Head of caudate nucleus (tissue), 42 donors: ENCODE measurements at regions of chr6 and their contacts with region 1.

Region 1: DNA sequence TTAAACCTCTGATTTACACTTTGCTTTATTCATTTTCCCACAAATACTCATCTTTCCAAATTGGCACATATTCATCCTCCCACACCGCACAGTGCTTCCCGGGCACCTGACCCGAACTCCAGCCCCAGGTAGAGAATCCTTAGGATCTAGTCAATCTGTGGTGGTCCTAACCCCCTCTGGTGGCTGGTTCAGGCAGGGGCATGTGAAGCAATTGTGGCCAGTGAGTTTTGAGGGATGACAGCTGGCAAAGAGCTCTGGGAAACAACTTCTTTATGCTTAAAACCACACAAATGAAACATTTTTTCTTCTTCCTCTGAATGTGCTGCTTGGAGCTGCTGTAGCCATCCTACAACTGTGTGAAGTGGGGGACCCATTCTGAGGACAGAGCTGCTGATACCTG is 54.7 kb downstream of the ELOVL5 start:
- DNase-seq: peak in 11 of 42 donors; percentile 14 to 55 (median 39)

Region 2: GRCh38 chr6:53064726-53065215 is 229.3 kb before region 1 on chr6:
- intact Hi-C with region 1: no loop called
- DNase-seq: peak; percentile 96 to 99 (median 98)

Region 3: GRCh38 chr6:53348371-53349208 is 54.5 kb after region 1 on chr6 and contains the start of gene ELOVL5:
- intact Hi-C with region 1: loop called (anchors 5 kb)
- DNase-seq: peak; percentile 94 to 100 (median 98)